IMR-90 (cell line): ENCODE measurements at regions of chr19 and their contacts with region 1.

Region 1: GRCh38 chr19:35044317-35045117 is 3.0 kb downstream of the HPN start:
- DNase-seq: peak; percentile 43
- ATAC-seq: peak; percentile 69
- H3K4me3 ChIP-seq: no peak overlapping the region
- H3K27ac ChIP-seq: no peak overlapping the region
- H3K4me1 ChIP-seq: peaks cover 5% of the 10 kb centered on the region; the same call in 1 of the 2 replicates
- H3K27me3 ChIP-seq: peaks cover 14% of the 10 kb centered on the region
- CTCF ChIP-seq: peak; percentile 81
- POLR2A ChIP-seq: no peak
- RAD21 ChIP-seq: peak; percentile 68

Region 2: GRCh38 chr19:34475026-34475974 is 569.2 kb before region 1 on chr19:
- CTCF ChIA-PET with region 1: no interaction called
- POLR2A ChIA-PET with region 1: no interaction called
- dilution Hi-C with region 1: no loop called
- in situ Hi-C with region 1: no loop called
- intact Hi-C with region 1: no loop called
- DNase-seq: peak; percentile 91
- ATAC-seq: peak; percentile 89
- H3K4me3 ChIP-seq: no peak overlapping the region
- H3K27ac ChIP-seq: peak overlapping the region; percentile 71
- H3K4me1 ChIP-seq: peaks cover 6% of the 10 kb centered on the region
- H3K27me3 ChIP-seq: no peaks in the 10 kb centered on the region
- CTCF ChIP-seq: no peak
- POLR2A ChIP-seq: no peak
- RAD21 ChIP-seq: no peak

Region 3: DNA sequence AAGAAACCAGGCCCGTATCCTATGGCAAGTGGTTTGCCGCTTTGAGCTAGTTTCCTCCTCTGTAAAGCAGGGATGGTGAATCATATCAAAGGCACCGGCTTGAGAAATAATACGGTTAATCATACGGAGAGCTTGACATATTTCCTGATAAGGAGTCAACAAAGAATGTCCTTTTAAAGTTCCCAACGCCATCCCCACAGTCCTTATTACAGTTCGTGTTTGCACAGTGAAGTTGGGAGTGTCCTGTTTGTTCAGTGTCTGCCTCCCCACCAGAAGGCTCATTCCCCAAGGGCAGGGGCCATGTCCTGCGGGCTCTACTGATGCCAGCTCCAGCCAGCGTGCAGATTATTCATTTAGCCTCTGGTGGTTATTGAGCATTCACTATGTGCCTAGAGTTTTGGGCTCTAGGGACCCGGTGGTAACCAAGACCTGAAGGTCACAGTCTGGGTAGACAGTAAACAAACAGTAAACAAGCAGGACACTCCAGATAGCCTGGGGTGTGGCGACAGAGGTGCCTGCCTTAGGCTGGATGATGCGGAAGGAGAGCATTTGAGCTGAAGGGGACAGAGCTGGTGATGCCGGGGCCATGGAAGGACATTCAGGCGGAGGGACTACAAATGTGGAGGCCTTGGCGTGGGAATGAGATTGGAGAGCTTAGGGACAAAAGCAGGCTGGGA is 38.0 kb before region 1 on chr19:
- CTCF ChIA-PET with region 1: no interaction called
- POLR2A ChIA-PET with region 1: no interaction called
- dilution Hi-C with region 1: no loop called
- in situ Hi-C with region 1: no loop called
- intact Hi-C with region 1: no loop called
- DNase-seq: peak; percentile 77
- ATAC-seq: peak; percentile 74
- H3K4me3 ChIP-seq: no peak overlapping the region
- H3K27ac ChIP-seq: peak overlapping the region; percentile 48
- H3K4me1 ChIP-seq: peaks cover 18% of the 10 kb centered on the region
- H3K27me3 ChIP-seq: no peaks in the 10 kb centered on the region
- CTCF ChIP-seq: no peak
- POLR2A ChIP-seq: no peak
- RAD21 ChIP-seq: no peak

Region 4: DNA sequence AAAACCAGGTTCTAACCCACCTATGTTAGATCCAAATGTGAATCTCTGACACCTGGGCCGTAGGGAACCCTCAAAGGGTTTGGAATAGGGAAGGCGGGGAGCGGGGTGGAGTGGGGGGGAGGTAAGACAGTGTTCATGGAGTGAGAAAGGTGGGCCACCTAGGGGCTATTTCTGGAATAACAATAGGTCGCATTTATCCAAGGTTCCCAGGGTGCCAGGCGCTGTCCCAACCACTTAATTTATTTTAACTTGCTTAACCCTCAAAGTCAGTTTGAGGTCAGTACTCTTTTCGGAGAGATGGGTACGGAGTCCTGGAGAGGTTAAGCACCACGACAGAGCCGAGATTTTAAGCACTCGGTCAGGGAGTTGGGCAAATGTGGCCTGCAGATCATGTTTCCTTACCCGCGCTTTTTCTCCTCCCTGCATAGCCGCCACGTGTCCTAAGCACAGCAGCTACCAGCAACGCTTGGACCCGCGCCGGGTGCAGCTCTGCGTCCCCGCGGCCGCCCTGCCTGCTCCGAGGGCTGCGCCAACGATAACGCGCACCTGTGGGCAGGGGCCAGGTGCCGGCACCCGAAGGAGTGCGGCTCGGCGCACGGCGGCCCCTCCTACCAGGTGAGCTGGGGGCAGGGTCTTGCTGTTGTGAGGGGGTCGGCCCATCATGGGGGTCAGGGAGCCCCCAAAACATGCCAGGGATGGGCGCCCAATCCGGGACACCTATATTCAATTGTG is 46.2 kb after region 1 on chr19:
- CTCF ChIA-PET with region 1: interaction called, 4 read pairs
- POLR2A ChIA-PET with region 1: no interaction called
- dilution Hi-C with region 1: no loop called
- in situ Hi-C with region 1: no loop called
- intact Hi-C with region 1: loop called (anchors 1 kb)
- DNase-seq: peak; percentile 53
- ATAC-seq: peak; percentile 79
- H3K4me3 ChIP-seq: no peak overlapping the region
- H3K27ac ChIP-seq: no peak overlapping the region
- H3K4me1 ChIP-seq: peaks cover 3% of the 10 kb centered on the region
- H3K27me3 ChIP-seq: peaks cover 3% of the 10 kb centered on the region; the same call in 1 of the 2 replicates
- CTCF ChIP-seq: peak; percentile 66
- POLR2A ChIP-seq: no peak
- RAD21 ChIP-seq: peak; percentile 64

Region 5: DNA sequence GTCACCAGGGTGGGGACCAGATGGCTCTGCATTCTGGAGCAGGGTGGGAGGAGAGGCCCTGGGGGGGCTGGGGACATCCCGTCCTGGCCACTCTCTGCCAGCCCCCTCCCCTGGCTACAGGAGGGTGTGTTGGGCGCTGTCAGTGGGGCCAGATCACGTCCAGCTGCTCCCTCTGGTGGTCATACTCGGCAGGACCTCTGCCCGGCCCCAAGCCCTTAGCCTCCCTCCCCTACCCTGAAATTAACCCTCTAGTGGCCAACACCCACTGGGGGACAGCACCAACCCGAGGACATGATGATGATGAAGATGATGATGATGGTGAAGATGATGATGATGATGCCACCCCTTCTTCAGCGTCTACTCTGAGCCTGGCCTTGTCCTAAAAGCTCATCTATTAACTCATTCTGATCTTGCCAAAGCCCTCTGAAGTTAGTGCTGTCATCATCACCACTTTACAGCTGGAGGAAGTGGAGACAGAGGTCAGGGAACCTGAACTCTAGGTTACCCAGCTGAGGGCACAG is 90.9 kb after region 1 on chr19:
- CTCF ChIA-PET with region 1: interaction called, 4 read pairs
- POLR2A ChIA-PET with region 1: no interaction called
- dilution Hi-C with region 1: no loop called
- in situ Hi-C with region 1: no loop called
- intact Hi-C with region 1: loop called (anchors 2 kb)
- DNase-seq: peak; percentile 55
- ATAC-seq: peak; percentile 89
- H3K4me3 ChIP-seq: no peak overlapping the region
- H3K27ac ChIP-seq: no peak overlapping the region
- H3K4me1 ChIP-seq: peaks cover 14% of the 10 kb centered on the region
- H3K27me3 ChIP-seq: peaks cover 14% of the 10 kb centered on the region; the same call in 1 of the 2 replicates
- CTCF ChIP-seq: peak; percentile 82
- POLR2A ChIP-seq: no peak
- RAD21 ChIP-seq: peak; percentile 67